ENCODE measurements at regions of chr11 and their contacts with region 1.

Region 1: GRCh38 chr11:74611369-74611861 is 19.0 kb downstream of the POLD3 start:
- DNase-seq: peak in 1 of 4 experiments; percentile 48
- ATAC-seq: peak; percentile 73
- H3K4me3 ChIP-seq: no peak overlapping the region
- H3K27ac ChIP-seq: no peak overlapping the region
- H3K4me1 ChIP-seq: peaks cover 0 to 2% of the 10 kb centered on the region in 2 experiments; a peak in 1 of 5 replicates
- H3K27me3 ChIP-seq: no peaks in the 10 kb centered on the region
- CTCF ChIP-seq: peak in 2 of 3 experiments; percentile 49 to 57; a peak in 4 of 6 replicates
- EP300 ChIP-seq: no peak
- POLR2A ChIP-seq: no peak
- RAD21 ChIP-seq: peak; percentile 31 to 60

Region 2: GRCh38 chr11:74726547-74727182 is 115.2 kb after region 1 on chr11:
- CTCF ChIA-PET with region 1: interaction called, 12 read pairs
- POLR2A ChIA-PET with region 1: interaction called, 3 read pairs
- in situ Hi-C with region 1: no loop called
- intact Hi-C with region 1: loop called (anchors 5 kb)
- DNase-seq: peak; percentile 79 to 83 (median 80)
- ATAC-seq: peak; percentile 99
- H3K4me3 ChIP-seq: no peak overlapping the region
- H3K27ac ChIP-seq: no peak overlapping the region
- H3K4me1 ChIP-seq: peaks cover 0 to 10% of the 10 kb centered on the region in 2 experiments; a peak in 1 of 5 replicates
- H3K27me3 ChIP-seq: peaks cover 52 to 59% of the 10 kb centered on the region in 2 experiments
- CTCF ChIP-seq: peak; percentile 90 to 94 (median 91)
- EP300 ChIP-seq: no peak
- POLR2A ChIP-seq: no peak
- RAD21 ChIP-seq: peak; percentile 77 to 90